Heart right ventricle (tissue), 16 donors: ENCODE measurements at regions of chr5 and their contacts with region 1.

Region 1: DNA sequence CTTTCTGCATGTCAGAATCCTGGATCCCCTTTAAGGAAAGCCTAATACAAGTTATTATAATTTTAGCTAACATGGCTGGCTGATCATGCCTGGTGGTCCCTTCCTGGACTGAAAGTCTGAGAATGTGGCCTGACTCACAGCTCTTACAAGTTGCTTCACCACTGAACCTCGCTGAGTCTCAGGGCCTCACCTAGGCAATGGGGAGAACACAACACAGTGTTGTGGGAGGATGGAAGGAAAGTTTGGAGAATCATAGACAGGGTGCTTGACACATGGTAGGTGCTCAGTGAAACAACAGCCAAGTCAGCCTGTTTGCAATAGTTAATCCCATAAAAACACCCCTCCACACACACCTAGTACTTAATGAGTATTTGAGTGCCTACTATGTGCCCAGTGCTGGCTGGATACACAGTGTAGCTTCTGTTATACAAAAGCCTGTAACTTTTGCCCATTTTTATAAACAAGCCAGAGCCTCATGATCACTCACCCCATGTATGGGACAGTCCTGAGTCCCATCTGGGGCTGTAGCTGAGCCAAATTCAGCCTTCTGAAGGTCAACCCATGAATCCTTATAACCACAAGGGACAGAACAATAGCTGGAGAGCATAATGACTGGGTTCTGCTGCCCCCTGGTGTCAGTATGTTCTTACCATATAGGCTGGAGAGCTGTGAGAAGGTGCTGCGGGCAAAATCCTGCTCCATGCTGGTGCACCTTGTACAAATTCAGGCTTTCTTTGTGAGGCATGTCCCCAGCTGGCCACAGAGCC is 3.9 kb downstream of the ACSL6 start:
- DNase-seq: peak; percentile 34 to 83
- ATAC-seq: peak; percentile 73 to 85 (median 76)
- H3K4me3 ChIP-seq: no peak overlapping the region
- H3K27ac ChIP-seq: no peak overlapping the region
- H3K4me1 ChIP-seq: peaks cover 6 to 45% (median 14%) of the 10 kb centered on the region in 9 donors
- H3K27me3 ChIP-seq: peaks cover 0 to 41% (median 19%) of the 10 kb centered on the region in 7 donors
- CTCF ChIP-seq: peak; percentile 39 to 81 (median 73)

Region 2: GRCh38 chr5:131423056-131423455 is 584.5 kb before region 1 on chr5:
- intact Hi-C with region 1: loop called in 4 of 10 experiments (anchors 10 kb)
- DNase-seq: no peak
- ATAC-seq: no peak
- H3K4me3 ChIP-seq: no peak overlapping the region
- H3K27ac ChIP-seq: no peak overlapping the region
- H3K4me1 ChIP-seq: no peaks in the 10 kb centered on the region
- H3K27me3 ChIP-seq: no peaks in the 10 kb centered on the region
- CTCF ChIP-seq: peak in 7 of 9 donors; percentile 39 to 53 (median 48)

Region 3: DNA sequence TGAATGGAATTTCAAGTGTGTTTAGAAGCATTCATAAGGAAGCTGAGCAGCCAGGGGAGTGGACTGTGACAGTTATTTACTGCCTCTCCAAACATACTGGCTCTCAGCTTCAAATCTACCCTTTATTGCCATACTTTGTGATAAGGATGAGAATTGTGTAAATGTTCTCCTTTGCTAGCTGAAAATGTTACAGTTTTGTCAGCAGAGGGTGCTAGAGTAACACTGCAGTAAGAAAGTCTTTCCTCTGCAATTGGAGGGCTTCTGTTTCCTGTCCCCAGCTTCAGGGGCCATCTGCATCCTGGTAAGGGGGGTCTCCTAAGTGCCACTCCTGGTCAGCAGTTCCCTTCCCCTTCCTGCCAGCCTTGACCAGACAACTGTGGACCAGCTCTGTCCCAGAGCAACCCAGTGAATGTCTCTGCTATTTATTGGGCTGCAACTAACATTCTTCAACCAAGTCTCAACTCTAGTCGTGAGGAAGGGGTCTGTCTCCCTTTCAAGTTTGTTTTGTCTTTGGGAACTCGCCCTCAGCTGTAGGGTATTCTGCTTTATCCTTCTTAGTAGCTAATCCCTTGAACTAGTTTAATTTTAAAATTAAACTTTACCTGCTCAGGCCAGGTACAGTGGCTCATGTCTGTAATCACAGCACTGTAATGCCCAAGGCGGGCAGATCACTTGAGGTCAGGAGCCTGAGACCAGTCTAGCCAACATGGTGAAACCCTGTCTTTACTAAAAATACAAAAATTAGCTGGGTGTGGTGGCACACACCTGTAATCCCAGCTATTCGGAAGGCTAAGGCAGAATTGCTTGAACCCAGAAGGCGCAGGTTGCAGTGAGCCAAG is 417.9 kb before region 1 on chr5:
- intact Hi-C with region 1: loop called (anchors 1 to 10 kb)
- DNase-seq: no peak
- ATAC-seq: peak in 6 of 8 donors; percentile 29 to 79 (median 65)
- H3K4me3 ChIP-seq: no peak overlapping the region
- H3K27ac ChIP-seq: no peak overlapping the region
- H3K4me1 ChIP-seq: peaks cover 0 to 24% (median 20%) of the 10 kb centered on the region in 9 donors
- H3K27me3 ChIP-seq: no peaks in the 10 kb centered on the region
- CTCF ChIP-seq: peak; percentile 77 to 95 (median 87)

Region 4: DNA sequence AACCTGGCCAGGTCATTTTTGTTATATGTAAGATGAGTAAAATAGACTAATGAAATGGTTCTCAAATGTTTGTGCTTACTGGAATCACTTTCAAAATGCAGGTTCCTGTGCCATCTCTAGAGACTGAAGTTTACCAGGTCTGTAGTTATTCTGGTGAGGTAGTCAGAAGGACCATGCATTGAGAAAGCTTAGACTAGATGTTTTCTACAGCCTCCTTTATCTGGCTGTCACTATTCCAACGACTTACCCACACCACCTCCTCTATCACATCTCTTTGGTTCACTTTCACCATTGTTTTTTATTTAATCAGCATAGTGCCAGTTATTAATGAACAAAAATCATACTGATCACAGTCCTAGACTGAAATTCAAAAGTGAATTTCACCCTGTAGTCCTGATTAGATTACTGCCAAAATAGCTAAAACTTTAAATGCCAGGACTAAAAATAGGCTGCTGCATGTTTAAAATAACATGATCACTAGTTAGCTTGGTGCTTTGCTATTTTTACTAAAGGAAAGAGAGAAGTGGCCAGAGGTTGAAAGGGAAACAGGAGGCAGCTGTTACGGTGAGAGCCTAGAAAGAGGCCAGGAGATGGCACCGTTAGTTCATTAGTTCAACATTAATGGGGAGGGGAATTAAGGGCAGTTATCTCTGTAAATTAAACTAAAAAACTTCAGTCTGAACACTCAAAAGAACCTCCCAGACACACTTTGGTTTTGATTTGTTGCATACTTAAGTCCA is 196.9 kb before region 1 on chr5:
- intact Hi-C with region 1: loop called (anchors 2 to 5 kb)
- DNase-seq: no peak
- ATAC-seq: peak; percentile 79 to 92 (median 86)
- H3K4me3 ChIP-seq: no peak overlapping the region
- H3K27ac ChIP-seq: peak overlapping the region in 6 of 10 donors; percentile 18 to 85 (median 70)
- H3K4me1 ChIP-seq: peaks cover 0 to 28% (median 8%) of the 10 kb centered on the region in 9 donors
- H3K27me3 ChIP-seq: no peaks in the 10 kb centered on the region
- CTCF ChIP-seq: peak in 7 of 9 donors; percentile 29 to 62 (median 42)